BJ (cell line): ENCODE measurements at regions of chr13 and their contacts with region 1.

Region 1: DNA sequence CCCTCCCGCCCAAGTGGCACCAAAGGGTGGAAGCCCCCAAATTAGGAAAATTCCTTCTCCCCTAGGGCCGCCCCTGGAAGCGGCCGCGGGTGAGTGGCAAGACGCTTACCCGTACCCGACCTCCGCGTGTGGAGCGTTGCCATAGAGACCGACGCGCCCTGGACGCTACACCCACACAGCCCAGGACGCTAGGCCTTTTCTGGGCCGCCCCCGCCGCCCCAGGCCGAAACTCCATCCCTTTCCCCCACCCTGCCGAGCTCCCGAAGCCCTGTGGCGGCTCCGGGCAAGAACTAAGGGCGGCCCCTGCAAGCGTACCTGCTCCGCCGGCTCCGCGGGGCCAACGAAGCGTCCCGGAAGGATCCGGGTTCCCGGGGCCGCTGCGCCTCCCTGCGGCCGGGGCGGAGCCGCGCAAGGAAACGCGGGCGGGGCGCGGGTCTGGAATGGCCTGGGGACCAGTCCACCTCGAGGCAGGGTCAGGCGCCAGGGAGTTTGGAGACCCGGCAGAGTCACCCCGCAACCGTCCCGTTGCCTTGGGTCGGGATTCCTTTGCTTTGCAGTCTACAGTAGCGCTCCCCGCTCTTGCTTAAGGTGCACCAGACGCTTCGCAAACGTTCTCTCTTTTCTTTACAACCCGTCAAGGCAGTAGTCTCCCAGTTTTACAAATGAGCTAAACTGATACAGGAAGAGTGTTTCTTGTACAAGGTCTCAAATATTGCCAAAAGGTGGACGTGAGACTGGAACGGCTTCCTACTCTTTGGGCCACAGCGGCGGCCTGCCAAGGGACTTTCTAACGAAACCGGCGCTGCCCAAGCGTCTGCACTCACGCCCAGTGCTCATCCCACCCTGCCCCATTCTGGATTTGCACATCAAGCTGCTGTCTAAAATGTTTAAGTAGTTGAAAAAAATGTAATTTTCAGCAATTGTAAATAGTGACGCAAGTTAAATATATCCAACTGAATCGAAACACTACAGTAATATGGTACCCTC is at the start of gene NEK5:
- DNase-seq: no peak
- H3K4me3 ChIP-seq: peak within 1 kb of the TSS; percentile 62
- H3K27me3 ChIP-seq: no peaks in the 10 kb centered on the region; the same call in 1 of the 2 replicates
- CTCF ChIP-seq: peak; percentile 69
- polyA plus RNA-seq, gene NEK5: 0.04 and 0.05 TPM in 2 replicates

Region 2: DNA sequence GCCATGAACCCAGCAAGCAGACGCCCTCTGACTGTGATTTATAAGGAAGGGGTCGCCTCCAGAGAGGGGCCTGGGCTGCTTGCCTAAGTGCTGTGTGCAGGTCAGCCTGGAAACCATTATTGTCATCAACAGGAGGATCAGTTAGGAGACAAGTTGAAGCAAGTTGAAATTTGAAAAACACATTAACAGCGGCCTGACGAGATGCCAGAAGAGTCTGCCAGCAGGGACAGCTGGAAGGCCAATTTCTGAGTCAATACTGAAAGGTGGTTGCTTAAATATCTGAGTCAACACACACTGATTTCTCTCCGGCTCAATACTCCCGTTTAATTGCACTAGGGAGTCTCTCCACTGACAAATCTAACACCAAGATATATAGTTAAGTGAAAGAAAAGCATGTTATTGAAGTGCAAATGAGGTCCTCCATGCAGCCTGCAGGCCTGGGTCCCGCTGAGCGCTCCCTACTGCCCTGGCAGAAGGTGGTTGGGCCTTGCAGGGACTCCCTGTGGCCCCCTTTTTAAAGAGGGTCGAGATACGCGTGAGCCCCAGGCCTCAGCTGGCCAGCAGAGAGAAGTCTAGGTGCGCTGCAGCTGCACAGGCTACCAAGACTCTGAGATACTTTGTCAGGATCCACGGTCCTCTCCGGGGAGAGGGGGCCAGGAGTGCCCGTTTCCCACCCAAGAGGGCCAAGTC is 1128.3 kb before region 1 on chr13:
- CTCF ChIA-PET with region 1: no interaction called
- POLR2A ChIA-PET with region 1: no interaction called
- DNase-seq: no peak
- H3K4me3 ChIP-seq: no peak overlapping the region
- H3K27me3 ChIP-seq: peaks cover 2% of the 10 kb centered on the region; the same call in 1 of the 2 replicates
- CTCF ChIP-seq: no peak

Region 3: DNA sequence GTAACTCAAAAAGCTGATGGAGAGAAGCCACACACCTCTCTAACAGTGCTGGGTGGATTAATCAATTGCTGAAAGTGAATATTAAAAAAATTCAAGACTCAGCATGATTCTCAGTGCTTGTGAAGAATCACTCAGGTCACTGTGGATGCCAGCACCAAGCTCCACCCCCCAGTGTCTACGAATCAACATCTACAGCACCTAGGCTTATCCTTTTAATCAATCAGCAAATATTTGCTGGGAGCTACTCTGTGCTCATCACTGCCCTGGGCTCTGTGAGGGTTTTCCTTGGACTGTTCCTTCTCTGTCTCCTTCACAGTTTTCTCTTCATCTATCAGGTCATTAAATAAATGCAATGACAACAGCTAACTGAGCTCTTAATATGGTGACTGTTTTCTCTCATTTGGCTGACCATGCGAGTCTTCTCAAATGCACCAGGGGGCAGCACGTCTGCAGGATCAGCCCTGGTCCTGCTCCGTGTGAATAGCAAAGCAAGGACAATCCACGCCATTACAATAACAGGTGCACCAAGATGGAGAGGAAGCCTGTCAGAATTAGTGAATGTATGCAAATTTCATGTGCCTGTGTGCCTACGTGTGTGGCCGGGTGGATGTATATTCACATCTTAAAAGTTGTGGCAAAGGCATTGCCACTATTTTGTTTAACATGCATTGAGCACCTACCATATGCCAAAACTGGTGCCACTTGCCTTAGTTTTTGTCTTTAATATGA is 1003.3 kb before region 1 on chr13:
- CTCF ChIA-PET with region 1: interaction called, 18 read pairs
- POLR2A ChIA-PET with region 1: no interaction called
- DNase-seq: no peak
- H3K4me3 ChIP-seq: no peak overlapping the region
- H3K27me3 ChIP-seq: no peaks in the 10 kb centered on the region
- CTCF ChIP-seq: peak; percentile 85

Region 4: DNA sequence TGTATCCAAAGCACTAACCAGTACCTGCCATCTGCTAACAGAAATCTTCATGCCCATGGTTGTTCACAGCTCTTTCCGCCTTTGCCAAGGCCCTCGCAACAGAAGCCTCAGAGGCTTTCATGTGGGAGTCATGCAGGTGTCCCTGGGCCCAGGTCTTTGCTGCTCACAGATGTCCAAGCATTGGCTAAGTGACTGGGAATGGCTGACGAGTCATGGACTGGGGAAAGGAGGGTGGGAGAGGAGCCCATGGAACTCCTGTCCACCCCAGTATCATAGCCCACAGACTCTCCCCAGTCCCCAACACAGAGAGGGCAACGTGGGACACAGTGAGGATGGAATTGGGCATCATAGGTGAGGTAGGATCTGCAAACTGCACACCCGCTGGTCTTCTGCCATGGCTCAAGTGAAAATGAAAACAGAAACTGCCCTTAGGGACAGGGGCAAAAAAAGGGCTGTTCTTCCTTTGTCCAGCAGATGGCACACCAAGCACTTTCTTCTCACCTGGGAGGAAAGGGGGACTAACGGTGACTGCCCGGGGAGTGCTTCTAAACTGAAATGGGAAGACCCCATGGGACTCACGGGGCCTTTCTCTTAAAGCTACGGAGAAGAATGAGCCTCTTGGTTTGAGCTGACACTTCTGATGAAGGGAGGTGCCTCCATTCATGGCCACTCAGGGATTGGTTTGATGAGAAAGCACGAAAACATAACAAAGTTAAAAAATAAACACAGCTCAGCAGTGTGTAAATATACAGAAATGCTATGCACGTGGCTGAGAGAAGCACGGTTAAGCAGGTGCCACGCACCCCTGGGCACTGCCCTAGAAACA is 314.0 kb before region 1 on chr13:
- CTCF ChIA-PET with region 1: interaction called, 42 read pairs
- POLR2A ChIA-PET with region 1: no interaction called
- DNase-seq: no peak
- H3K4me3 ChIP-seq: no peak overlapping the region
- H3K27me3 ChIP-seq: peaks cover 20% of the 10 kb centered on the region
- CTCF ChIP-seq: peak; percentile 85

Region 5: GRCh38 chr13:51895906-51896888 is 232.8 kb before region 1 on chr13:
- CTCF ChIA-PET with region 1: interaction called, 42 read pairs
- POLR2A ChIA-PET with region 1: no interaction called
- DNase-seq: peak; percentile 1
- H3K4me3 ChIP-seq: no peak overlapping the region
- H3K27me3 ChIP-seq: no peaks in the 10 kb centered on the region; the same call in 1 of the 2 replicates
- CTCF ChIP-seq: peak; percentile 86

Region 6: DNA sequence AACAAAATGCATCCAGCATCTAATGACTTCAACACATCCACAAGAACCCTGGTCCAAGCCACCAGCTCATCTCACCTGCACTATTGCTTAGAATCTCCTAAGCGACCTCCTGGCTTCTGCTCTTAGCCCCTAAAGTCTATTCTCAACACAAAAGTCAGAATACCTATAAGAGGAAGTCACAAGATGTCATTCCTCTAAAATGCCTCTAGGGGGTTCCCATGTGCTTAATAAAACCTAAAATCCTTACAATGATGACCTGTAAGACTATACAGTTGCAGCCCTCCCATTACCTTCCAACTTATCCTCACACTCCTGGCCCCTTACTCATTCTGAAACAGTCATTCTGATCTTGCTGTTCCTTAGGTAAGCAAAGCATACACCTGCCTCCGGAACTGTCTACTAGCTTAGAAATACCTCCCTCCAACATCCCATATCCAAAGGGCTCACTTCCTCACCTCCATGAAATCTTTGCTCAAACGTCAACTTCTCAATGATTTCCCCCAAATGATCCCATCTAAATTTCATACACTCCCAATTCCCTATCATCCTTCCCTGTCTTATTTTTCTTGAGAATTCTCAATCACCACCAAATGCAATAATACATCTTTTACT is 127.8 kb before region 1 on chr13:
- CTCF ChIA-PET with region 1: interaction called, 20 read pairs
- POLR2A ChIA-PET with region 1: no interaction called
- DNase-seq: no peak
- H3K4me3 ChIP-seq: no peak overlapping the region
- H3K27me3 ChIP-seq: peaks cover 12% of the 10 kb centered on the region
- CTCF ChIP-seq: peak; percentile 68

Region 7: GRCh38 chr13:52020191-52020590 is 108.8 kb before region 1 on chr13:
- CTCF ChIA-PET with region 1: no interaction called
- POLR2A ChIA-PET with region 1: no interaction called
- DNase-seq: no peak
- H3K4me3 ChIP-seq: no peak overlapping the region
- H3K27me3 ChIP-seq: no peaks in the 10 kb centered on the region
- CTCF ChIP-seq: no peak

Region 8: GRCh38 chr13:52118095-52118494 is 10.9 kb before region 1 on chr13:
- CTCF ChIA-PET with region 1: interaction called, 15 read pairs
- POLR2A ChIA-PET with region 1: no interaction called
- DNase-seq: no peak
- H3K4me3 ChIP-seq: no peak overlapping the region
- H3K27me3 ChIP-seq: peaks cover 2% of the 10 kb centered on the region; the same call in 1 of the 2 replicates
- CTCF ChIP-seq: no peak

Region 9: GRCh38 chr13:52141297-52141696 is 12.3 kb after region 1 on chr13:
- CTCF ChIA-PET with region 1: interaction called, 14 read pairs
- POLR2A ChIA-PET with region 1: no interaction called
- DNase-seq: no peak
- H3K4me3 ChIP-seq: no peak overlapping the region
- H3K27me3 ChIP-seq: no peaks in the 10 kb centered on the region
- CTCF ChIP-seq: no peak